Activated CD4-positive, alpha-beta T cell treated with anti-CD3 and anti-CD28 coated beads, Interleukin-2, amount 10 ng/mL, durations not matched to agents 24 days and 14 days (primary cell): ENCODE measurements at regions of chr12 and their contacts with region 1.

Region 1: GRCh38 chr12:85468356-85469157 is 188.5 kb downstream of the ALX1 start:
- DNase-seq: peak; percentile 82
- H3K4me3 Mint-ChIP-seq: peak overlapping the region; percentile 77
- H3K27ac Mint-ChIP-seq: peak overlapping the region; percentile 38
- H3K4me1 Mint-ChIP-seq: peaks cover 16% of the 10 kb centered on the region
- H3K27me3 Mint-ChIP-seq: peaks cover 11% of the 10 kb centered on the region

Region 2: DNA sequence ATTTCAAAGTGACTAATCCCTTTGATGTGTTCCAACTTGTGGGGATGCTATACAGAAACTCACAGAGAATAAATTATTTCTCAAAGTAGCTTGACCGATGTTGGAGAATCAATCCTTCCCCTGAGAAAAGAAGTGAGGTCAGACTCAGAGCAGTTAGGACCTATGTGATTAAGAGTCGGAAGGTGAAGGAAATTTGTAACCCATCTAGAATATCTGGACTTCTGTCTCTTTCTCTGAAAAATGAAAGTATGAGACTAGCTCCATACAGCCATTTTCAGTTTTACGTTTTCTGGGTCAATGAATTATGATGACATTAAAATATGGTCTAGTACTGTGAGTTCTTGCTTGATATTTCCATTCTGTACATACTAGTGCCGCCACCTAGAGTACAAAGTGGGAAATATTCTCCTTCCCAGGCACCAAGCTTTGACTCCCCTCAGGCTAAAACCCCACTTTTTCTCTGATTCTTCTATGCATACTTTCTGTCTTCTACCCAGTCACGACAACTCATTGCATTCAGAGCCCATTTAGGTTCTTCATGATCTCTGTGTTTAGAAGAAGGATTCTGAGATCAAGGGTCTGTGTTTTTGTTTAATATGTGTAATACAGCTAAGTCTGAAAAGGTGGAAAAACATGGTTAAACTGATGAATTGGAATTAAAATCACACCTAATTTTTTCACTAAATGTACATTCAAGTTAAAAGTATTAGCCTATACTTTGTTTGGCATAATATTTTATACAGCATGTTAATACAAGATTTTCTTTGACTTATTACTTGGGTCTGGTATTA is 398.6 kb after region 1 on chr12:
- intact Hi-C with region 1: loop called (anchors 1 kb)
- DNase-seq: peak; percentile 68
- H3K4me3 Mint-ChIP-seq: no peak overlapping the region
- H3K27ac Mint-ChIP-seq: no peak overlapping the region
- H3K4me1 Mint-ChIP-seq: no peaks in the 10 kb centered on the region
- H3K27me3 Mint-ChIP-seq: no peaks in the 10 kb centered on the region

Region 3: DNA sequence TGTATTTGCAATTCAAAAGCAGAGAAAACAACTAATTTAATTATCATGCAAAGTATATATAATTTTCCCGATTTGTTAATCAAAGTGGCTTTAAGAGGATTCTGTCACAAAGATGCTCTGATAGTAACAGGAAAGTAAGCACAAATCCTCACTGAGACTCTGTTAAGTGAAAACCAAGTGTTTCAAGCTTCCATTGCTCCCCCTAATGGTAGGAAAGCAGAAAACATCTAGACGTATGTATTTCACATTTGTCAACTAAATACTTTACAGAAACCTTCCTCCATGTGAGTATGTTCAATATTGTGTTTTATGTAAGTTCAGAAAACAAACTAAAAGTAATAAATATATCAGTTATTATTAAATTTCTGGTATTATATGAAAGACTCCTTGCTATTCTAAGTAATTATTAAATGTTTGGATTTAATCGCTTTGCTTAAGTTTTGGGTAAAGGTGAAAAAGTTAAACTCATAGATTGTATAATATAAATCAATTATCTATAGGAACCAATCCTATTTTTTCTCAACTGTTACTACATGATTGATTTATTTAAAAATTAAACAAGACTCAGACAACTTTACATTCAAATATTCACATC is 404.0 kb after region 1 on chr12:
- intact Hi-C with region 1: loop called (anchors 1 kb)
- DNase-seq: peak; percentile 59
- H3K4me3 Mint-ChIP-seq: no peak overlapping the region
- H3K27ac Mint-ChIP-seq: no peak overlapping the region
- H3K4me1 Mint-ChIP-seq: no peaks in the 10 kb centered on the region
- H3K27me3 Mint-ChIP-seq: no peaks in the 10 kb centered on the region

Region 4: DNA sequence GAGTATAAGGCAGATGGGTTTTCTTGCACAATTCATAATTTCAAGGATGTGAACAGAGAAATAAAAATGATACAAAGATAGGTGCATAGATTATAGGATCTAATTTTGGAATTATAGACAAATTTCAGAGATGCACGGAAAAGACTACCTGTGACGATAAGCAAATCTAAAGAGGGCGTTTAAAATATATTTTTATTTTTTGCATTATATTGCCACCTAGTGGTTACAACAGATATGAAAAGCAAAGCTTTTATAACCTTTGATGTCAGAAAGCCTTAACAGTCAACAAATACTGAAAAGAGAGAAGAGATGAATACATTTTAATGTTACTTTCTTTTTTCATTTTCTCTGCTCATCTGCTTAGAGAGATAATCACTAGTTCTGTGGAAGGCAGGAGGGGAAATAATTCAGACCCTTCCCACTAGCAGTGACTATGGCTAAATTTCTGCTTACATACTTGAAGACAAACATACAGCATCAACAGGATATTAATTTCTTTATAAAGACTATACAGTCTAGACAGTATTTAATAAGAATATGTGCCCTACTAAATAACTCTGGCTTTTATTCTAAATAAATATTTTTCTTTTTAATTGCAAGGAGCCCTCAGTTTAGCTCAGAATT is 451.9 kb after region 1 on chr12:
- intact Hi-C with region 1: loop called (anchors 1 kb)
- DNase-seq: no peak
- H3K4me3 Mint-ChIP-seq: no peak overlapping the region
- H3K27ac Mint-ChIP-seq: no peak overlapping the region
- H3K4me1 Mint-ChIP-seq: no peaks in the 10 kb centered on the region
- H3K27me3 Mint-ChIP-seq: no peaks in the 10 kb centered on the region